ENCODE measurements at regions of chr5 and their contacts with region 1.

Region 1: GRCh38 chr5:178324481-178325310 is 92.1 kb upstream of the PHYKPL start:
- DNase-seq: no peak

Region 2: GRCh38 chr5:178288381-178289368 is 36.0 kb before region 1 on chr5:
- intact Hi-C with region 1: loop called (anchors 5 kb)
- DNase-seq: no peak

Measured in cardiac septum (tissue), 1 donor.